ENCODE measurements at regions of chr7 and their contacts with region 1.

Region 1: DNA sequence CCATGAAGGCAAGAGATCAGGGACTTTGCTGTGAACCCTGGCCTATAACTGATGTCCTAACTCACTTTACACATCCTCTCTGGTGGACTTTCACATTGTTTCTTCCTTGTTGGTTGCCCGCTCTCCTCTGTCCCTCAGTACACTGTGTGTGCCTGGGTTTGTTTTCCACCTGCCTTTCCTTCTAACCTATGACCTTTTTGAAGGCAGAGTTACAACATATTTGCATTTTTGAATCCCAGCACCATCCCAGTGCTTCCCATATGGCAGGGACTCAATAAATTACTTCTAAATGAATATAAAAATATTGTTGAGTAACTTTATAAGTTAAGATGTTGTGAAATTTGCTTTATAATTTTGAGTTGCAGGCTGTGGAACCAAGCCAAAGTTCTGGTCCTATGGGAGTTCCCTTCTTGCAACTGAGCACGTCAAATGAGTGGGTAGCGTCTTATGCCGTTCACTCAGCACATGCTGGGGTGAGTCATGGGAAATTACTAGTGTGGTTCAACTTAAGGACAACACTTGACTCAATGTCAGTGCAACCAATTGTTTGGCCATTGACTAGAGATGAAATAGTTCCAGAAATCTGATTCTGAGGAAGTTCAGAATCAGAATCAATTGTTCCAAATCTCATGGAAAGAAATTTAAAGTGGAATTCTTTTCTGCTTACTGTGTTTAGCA is 250.9 kb downstream of the TWIST1 start:
- DNase-seq: no peak
- H3K4me3 ChIP-seq: no peak overlapping the region
- H3K27ac ChIP-seq: no peak overlapping the region
- H3K4me1 ChIP-seq: no peaks in the 10 kb centered on the region
- CTCF ChIP-seq: no peak

Region 2: DNA sequence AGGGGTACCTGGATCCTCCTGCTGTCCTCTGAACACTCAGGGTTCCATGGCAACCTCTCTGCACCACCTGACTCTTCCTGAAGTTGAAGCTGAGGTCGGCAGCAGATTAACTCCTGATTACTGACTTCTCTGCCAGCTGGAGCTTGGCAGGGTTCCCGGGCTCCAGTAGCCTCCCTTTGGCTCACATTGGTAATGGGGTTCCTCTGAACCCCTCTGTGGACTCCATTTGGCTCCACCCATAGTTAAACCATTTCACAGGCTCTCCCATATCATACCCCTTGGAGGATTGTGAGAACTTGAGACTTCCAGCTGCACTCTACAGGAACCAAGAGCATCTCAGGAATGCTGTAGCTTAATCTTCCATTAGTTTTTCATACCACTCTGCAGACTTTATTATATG is 78.5 kb before region 1 on chr7:
- CTCF ChIA-PET with region 1: no interaction called
- POLR2A ChIA-PET with region 1: no interaction called
- intact Hi-C with region 1: no loop called
- DNase-seq: no peak
- H3K4me3 ChIP-seq: no peak overlapping the region
- H3K27ac ChIP-seq: no peak overlapping the region
- H3K4me1 ChIP-seq: no peaks in the 10 kb centered on the region
- CTCF ChIP-seq: no peak

Region 3: DNA sequence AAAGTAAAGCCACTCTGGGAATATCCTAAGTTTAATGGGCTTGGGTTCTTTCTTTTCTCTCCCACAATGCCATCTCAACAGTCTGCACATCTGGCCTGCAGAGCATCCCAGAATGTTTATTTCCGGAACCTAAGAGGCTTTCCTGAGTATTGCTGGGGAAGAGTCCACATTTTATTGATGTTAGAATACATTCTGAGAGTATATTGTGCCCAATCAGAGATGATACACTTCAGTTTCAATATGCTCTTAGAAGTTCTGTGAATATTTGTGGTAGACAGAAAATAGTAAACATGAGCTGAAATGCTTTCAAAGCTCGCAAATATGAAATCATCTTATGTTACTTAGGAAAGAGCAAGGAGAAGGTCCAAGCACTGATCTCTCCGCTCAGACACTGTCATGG is 50.3 kb after region 1 on chr7:
- CTCF ChIA-PET with region 1: no interaction called
- POLR2A ChIA-PET with region 1: no interaction called
- intact Hi-C with region 1: loop called (anchors 1 kb)
- DNase-seq: no peak
- H3K4me3 ChIP-seq: no peak overlapping the region
- H3K27ac ChIP-seq: no peak overlapping the region
- H3K4me1 ChIP-seq: no peaks in the 10 kb centered on the region
- CTCF ChIP-seq: no peak

Measured in OCI-LY7 (cell line).